Astrocyte of the cerebellum (primary cell): ENCODE measurements at regions of chr2 and their contacts with region 1.

Region 1: DNA sequence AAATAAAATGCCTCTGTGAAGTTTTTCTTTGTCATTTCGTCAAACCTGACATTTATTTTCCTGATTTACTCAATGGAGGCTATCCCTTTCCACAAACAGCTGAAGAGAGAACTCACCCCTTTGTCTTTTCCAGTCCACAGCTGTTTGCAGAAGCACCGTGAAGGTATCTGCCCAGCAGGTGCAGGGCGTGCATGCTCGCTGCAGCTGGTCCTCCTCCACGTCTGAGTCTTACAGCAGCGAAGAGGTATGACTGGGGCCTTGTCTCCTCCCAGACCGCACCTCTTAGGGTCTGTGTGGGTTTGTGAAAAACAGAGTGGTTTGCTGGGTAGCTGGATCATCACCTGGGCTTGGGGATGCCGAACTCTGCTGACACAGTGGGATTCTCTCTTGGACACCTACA is 9.7 kb downstream of the SPP2 start:
- DNase-seq: no peak
- H3K4me3 ChIP-seq: no peak overlapping the region
- CTCF ChIP-seq: no peak

Region 2: GRCh38 chr2:234107861-234108260 is 47.6 kb after region 1 on chr2:
- in situ Hi-C with region 1: loop called (anchors 5 kb)
- DNase-seq: no peak
- H3K4me3 ChIP-seq: no peak overlapping the region
- CTCF ChIP-seq: no peak

Region 3: GRCh38 chr2:234500394-234501006 is 440.3 kb after region 1 on chr2:
- in situ Hi-C with region 1: no loop called
- DNase-seq: no peak
- H3K4me3 ChIP-seq: no peak overlapping the region
- CTCF ChIP-seq: peak; percentile 66